ENCODE measurements at regions of chr18 and their contacts with region 1.

Region 1: GRCh38 chr18:80157708-80158343 is 48.8 kb downstream of the ADNP2 start:
- DNase-seq: peak; percentile 82
- ATAC-seq: peak; percentile 38
- H3K4me3 Mint-ChIP-seq: no peak overlapping the region
- H3K27ac Mint-ChIP-seq: no peak overlapping the region
- H3K4me1 Mint-ChIP-seq: peaks cover 10% of the 10 kb centered on the region
- H3K27me3 Mint-ChIP-seq: peaks cover 17% of the 10 kb centered on the region

Region 2: GRCh38 chr18:79964330-79965118 is 193.3 kb before region 1 on chr18 and contains the start of gene HSBP1L1:
- CTCF ChIA-PET with region 1: no interaction called
- DNase-seq: peak; percentile 70
- ATAC-seq: peak; percentile 77
- H3K4me3 Mint-ChIP-seq: peak within 1 kb of the TSS; percentile 68
- H3K27ac Mint-ChIP-seq: peak within 1 kb of the TSS; percentile 90
- H3K4me1 Mint-ChIP-seq: peaks cover 55% of the 10 kb centered on the region
- H3K27me3 Mint-ChIP-seq: peaks cover 23% of the 10 kb centered on the region
- total RNA-seq, gene HSBP1L1: 1.1 to 5.0 TPM

Region 3: GRCh38 chr18:80147418-80148325 is 10.2 kb before region 1 on chr18:
- CTCF ChIA-PET with region 1: interaction called, 65 read pairs
- DNase-seq: peak; percentile 88
- ATAC-seq: peak; percentile 90
- H3K4me3 Mint-ChIP-seq: peak overlapping the region; percentile 74
- H3K27ac Mint-ChIP-seq: peak overlapping the region; percentile 50
- H3K4me1 Mint-ChIP-seq: peaks cover 13% of the 10 kb centered on the region
- H3K27me3 Mint-ChIP-seq: peaks cover 10% of the 10 kb centered on the region

Region 4: GRCh38 chr18:80171054-80171872 is 13.4 kb after region 1 on chr18:
- CTCF ChIA-PET with region 1: interaction called, 20 read pairs
- DNase-seq: peak; percentile 69
- ATAC-seq: no peak
- H3K4me3 Mint-ChIP-seq: no peak overlapping the region
- H3K27ac Mint-ChIP-seq: no peak overlapping the region
- H3K4me1 Mint-ChIP-seq: peaks cover 40% of the 10 kb centered on the region
- H3K27me3 Mint-ChIP-seq: peaks cover 67% of the 10 kb centered on the region

Region 5: GRCh38 chr18:80176334-80177073 is 18.7 kb after region 1 on chr18:
- CTCF ChIA-PET with region 1: interaction called, 20 read pairs
- DNase-seq: no peak
- ATAC-seq: no peak
- H3K4me3 Mint-ChIP-seq: no peak overlapping the region
- H3K27ac Mint-ChIP-seq: no peak overlapping the region
- H3K4me1 Mint-ChIP-seq: peaks cover 52% of the 10 kb centered on the region
- H3K27me3 Mint-ChIP-seq: peaks cover 59% of the 10 kb centered on the region

Region 6: GRCh38 chr18:80253871-80254492 is 96.2 kb after region 1 on chr18:
- CTCF ChIA-PET with region 1: interaction called, 68 read pairs
- DNase-seq: no peak
- ATAC-seq: peak; percentile 67
- H3K4me3 Mint-ChIP-seq: no peak overlapping the region
- H3K27ac Mint-ChIP-seq: no peak overlapping the region
- H3K4me1 Mint-ChIP-seq: no peaks in the 10 kb centered on the region
- H3K27me3 Mint-ChIP-seq: peaks cover 45% of the 10 kb centered on the region

Measured in activated CD8-positive, alpha-beta memory T cell treated with anti-CD3 and anti-CD28 coated beads, Interleukin-2, amount 10 ng/mL, durations not matched to agents 7 days and 5 days (primary cell).